CD4-positive, alpha-beta T cell (primary cell): ENCODE measurements at regions of chr9 and their contacts with region 1.

Region 1: GRCh38 chr9:71819115-71819739 is 50.9 kb upstream of the CEMIP2 start:
- DNase-seq: peak; percentile 12 to 82 (median 46)
- ATAC-seq: no peak
- H3K4me3 ChIP-seq: no peak overlapping the region
- H3K4me3 Mint-ChIP-seq: no peak overlapping the region
- H3K27ac ChIP-seq: no peak overlapping the region
- H3K27ac Mint-ChIP-seq: no peak overlapping the region
- H3K4me1 ChIP-seq: peaks cover 4% of the 10 kb centered on the region
- H3K4me1 Mint-ChIP-seq: peaks cover 23% of the 10 kb centered on the region
- H3K27me3 ChIP-seq: no peaks in the 10 kb centered on the region
- H3K27me3 Mint-ChIP-seq: no peaks in the 10 kb centered on the region
- CTCF ChIP-seq: peak; percentile 95

Region 2: GRCh38 chr9:71285191-71285656 is 534.0 kb before region 1 on chr9:
- CTCF ChIA-PET with region 1: no interaction called
- POLR2A ChIA-PET with region 1: no interaction called
- intact Hi-C with region 1: loop called in 1 of 2 experiments (anchors 5 kb)
- DNase-seq: peak in 7 of 14 experiments; percentile 6 to 56 (median 36)
- ATAC-seq: peak; percentile 51
- H3K4me3 ChIP-seq: no peak overlapping the region
- H3K4me3 Mint-ChIP-seq: no peak overlapping the region
- H3K27ac ChIP-seq: no peak overlapping the region
- H3K27ac Mint-ChIP-seq: no peak overlapping the region
- H3K4me1 ChIP-seq: no peaks in the 10 kb centered on the region
- H3K4me1 Mint-ChIP-seq: no peaks in the 10 kb centered on the region
- H3K27me3 ChIP-seq: no peaks in the 10 kb centered on the region
- H3K27me3 Mint-ChIP-seq: no peaks in the 10 kb centered on the region
- CTCF ChIP-seq: peak; percentile 76

Region 3: DNA sequence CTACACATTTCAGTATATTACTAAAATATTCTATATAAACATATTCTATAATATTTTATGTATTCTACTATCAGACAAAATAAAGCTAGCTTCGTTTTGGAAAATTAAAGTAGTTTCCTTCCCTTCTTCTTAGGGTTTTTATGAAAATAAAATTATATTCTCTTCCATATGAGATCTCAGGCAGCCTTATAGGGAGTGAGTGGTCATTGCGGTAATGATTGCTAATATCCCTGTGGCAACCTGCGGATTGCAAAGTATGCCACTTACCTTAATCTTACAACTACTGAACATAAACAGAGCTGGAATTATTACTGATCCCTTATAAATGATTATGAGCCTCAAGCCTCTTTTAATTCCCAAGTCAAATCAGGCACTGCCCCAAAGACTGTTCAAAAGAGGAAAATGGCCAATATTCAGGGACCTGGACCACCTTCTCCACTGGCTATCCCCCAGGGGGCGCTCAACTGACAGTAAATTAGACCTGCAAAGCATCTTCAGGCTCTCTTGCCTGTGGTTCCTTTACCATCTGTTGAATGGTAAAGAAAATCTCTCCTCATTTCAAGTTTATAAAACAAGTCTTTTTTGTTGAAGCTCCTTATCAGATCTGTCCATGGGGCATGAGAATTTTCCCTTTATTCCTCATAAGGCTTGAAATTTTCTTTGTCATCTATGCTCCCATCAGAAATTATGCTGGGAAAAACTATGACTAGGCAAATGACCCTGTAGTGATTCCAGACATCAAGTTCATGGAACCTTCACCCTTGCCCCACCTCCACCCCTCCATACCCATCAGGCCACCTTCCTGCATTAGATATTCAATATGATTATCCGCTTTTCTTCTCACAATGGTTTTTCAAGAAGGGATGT is 214.8 kb before region 1 on chr9:
- CTCF ChIA-PET with region 1: interaction called, 3 read pairs
- POLR2A ChIA-PET with region 1: no interaction called
- intact Hi-C with region 1: loop called (anchors 1 kb)
- DNase-seq: peak; percentile 60 to 91 (median 77)
- ATAC-seq: peak; percentile 75
- H3K4me3 ChIP-seq: no peak overlapping the region
- H3K4me3 Mint-ChIP-seq: no peak overlapping the region
- H3K27ac ChIP-seq: no peak overlapping the region
- H3K27ac Mint-ChIP-seq: no peak overlapping the region
- H3K4me1 ChIP-seq: no peaks in the 10 kb centered on the region
- H3K4me1 Mint-ChIP-seq: no peaks in the 10 kb centered on the region
- H3K27me3 ChIP-seq: no peaks in the 10 kb centered on the region
- H3K27me3 Mint-ChIP-seq: no peaks in the 10 kb centered on the region
- CTCF ChIP-seq: peak; percentile 94

Region 4: DNA sequence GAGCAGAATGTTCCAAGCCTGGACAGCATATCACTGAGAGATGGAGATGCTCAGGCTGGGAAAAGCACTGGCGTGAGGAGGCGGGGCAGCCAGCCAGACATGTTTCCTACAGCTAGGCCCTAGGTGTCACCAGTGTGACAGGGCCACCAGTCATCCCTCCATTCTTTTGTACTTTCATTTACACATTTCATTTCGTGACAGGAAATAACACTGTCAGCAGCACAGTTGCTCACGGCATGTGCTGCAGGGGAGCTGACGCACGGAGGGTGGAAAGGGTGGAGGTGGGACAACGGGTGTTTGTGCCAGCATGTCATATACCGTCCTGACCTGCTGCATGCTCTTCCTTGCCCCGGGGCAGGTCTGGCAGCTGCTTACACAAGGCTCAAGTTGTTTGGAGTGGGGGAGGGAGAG is 36.1 kb before region 1 on chr9:
- CTCF ChIA-PET with region 1: interaction called, 28 read pairs
- POLR2A ChIA-PET with region 1: interaction called, 12 read pairs
- intact Hi-C with region 1: loop called (anchors 1 to 2 kb)
- DNase-seq: peak; percentile 74 to 96 (median 82)
- ATAC-seq: peak; percentile 94
- H3K4me3 ChIP-seq: peak overlapping the region; percentile 8
- H3K4me3 Mint-ChIP-seq: peak overlapping the region; percentile 64
- H3K27ac ChIP-seq: peak overlapping the region; percentile 81 to 90
- H3K27ac Mint-ChIP-seq: peak overlapping the region; percentile 97
- H3K4me1 ChIP-seq: peaks cover 32% of the 10 kb centered on the region
- H3K4me1 Mint-ChIP-seq: peaks cover 51% of the 10 kb centered on the region
- H3K27me3 ChIP-seq: no peaks in the 10 kb centered on the region
- H3K27me3 Mint-ChIP-seq: no peaks in the 10 kb centered on the region
- CTCF ChIP-seq: peak; percentile 65

Region 5: GRCh38 chr9:71795097-71795813 is 24.0 kb before region 1 on chr9:
- CTCF ChIA-PET with region 1: no interaction called
- POLR2A ChIA-PET with region 1: interaction called, 17 read pairs
- intact Hi-C with region 1: no loop called
- DNase-seq: peak in 6 of 14 experiments; percentile 14 to 89 (median 59)
- ATAC-seq: peak; percentile 88
- H3K4me3 ChIP-seq: no peak overlapping the region
- H3K4me3 Mint-ChIP-seq: peak overlapping the region; percentile 60
- H3K27ac ChIP-seq: peak overlapping the region; percentile 46 to 86
- H3K27ac Mint-ChIP-seq: peak overlapping the region; percentile 94
- H3K4me1 ChIP-seq: peaks cover 57% of the 10 kb centered on the region
- H3K4me1 Mint-ChIP-seq: peaks cover 73% of the 10 kb centered on the region
- H3K27me3 ChIP-seq: no peaks in the 10 kb centered on the region
- H3K27me3 Mint-ChIP-seq: no peaks in the 10 kb centered on the region
- CTCF ChIP-seq: no peak

Region 6: DNA sequence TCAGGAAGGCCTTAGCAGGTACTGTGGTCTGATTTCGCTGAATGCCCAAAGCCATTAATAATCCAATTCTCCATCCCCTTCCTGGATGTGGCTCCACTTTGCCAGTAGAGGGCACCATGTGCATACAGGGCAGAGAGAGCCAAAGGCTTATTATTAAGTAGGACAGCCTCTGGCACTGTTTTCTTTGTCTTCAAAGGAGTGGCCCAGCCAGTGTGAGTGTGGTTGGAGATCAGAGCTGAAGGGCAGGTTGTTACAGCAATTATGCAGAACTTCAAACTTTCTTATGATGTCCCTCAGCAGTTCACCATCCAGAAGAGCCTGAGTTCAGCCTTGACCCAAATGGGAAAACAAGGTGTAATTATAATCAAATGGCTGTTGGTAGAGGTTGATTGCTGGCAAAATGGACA is 12.3 kb before region 1 on chr9:
- CTCF ChIA-PET with region 1: interaction called, 28 read pairs
- POLR2A ChIA-PET with region 1: no interaction called
- intact Hi-C with region 1: no loop called
- DNase-seq: peak; percentile 31 to 81 (median 46)
- ATAC-seq: peak; percentile 90
- H3K4me3 ChIP-seq: no peak overlapping the region
- H3K4me3 Mint-ChIP-seq: no peak overlapping the region
- H3K27ac ChIP-seq: no peak overlapping the region
- H3K27ac Mint-ChIP-seq: no peak overlapping the region
- H3K4me1 ChIP-seq: peaks cover 10% of the 10 kb centered on the region
- H3K4me1 Mint-ChIP-seq: peaks cover 14% of the 10 kb centered on the region
- H3K27me3 ChIP-seq: no peaks in the 10 kb centered on the region
- H3K27me3 Mint-ChIP-seq: no peaks in the 10 kb centered on the region
- CTCF ChIP-seq: peak; percentile 90

Region 7: DNA sequence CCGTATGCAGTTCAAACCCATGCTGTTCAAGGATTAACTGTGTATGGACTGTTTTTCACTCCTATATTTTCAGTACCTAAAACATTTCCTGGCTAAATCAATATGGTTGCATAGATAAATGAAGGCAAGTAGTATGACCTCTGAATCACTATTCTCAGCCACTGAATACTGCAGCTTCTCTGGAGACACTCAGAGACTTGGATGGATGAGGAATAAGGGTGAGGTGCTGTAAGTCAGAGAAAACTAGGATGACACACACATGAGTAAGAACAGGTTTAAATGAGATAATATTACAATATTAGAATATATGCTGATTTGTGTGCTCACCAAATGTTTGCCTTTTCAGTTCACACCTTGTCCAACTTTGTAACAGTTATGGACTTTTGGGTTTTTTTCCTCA is 1306.4 kb after region 1 on chr9:
- CTCF ChIA-PET with region 1: no interaction called
- POLR2A ChIA-PET with region 1: no interaction called
- intact Hi-C with region 1: no loop called
- DNase-seq: no peak
- ATAC-seq: no peak
- H3K4me3 ChIP-seq: no peak overlapping the region
- H3K4me3 Mint-ChIP-seq: no peak overlapping the region
- H3K27ac ChIP-seq: no peak overlapping the region
- H3K27ac Mint-ChIP-seq: no peak overlapping the region
- H3K4me1 ChIP-seq: no peaks in the 10 kb centered on the region
- H3K4me1 Mint-ChIP-seq: peaks cover 24% of the 10 kb centered on the region
- H3K27me3 ChIP-seq: no peaks in the 10 kb centered on the region
- H3K27me3 Mint-ChIP-seq: no peaks in the 10 kb centered on the region
- CTCF ChIP-seq: no peak